Heart left ventricle (tissue), 16 donors: ENCODE measurements at regions of chr5 and their contacts with region 1.

Region 1: DNA sequence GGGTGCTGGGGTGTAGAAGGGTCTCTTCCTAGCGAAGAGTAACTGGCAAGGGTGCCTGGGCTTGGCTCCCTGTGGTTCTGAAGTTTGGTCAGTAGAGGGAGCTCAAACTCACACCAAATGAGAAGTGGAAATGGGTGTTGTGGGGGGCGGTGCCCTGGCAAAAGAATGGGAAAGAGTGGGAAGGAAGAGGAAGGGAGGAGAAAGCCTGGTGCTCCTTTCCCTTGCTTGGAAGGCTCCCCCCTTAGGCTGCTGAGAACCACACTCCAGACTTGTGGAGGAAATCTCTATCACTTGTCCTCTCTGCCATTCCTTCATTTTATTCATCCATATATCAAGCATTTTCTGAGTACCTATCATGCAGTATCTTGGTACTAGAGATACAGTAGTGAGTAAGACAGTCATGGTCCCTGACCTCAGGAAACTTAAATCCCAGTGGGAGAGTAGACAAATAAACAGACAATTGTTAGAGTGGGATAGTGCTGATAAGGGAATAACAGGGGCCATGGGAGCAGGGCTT is 13.0 kb downstream of the SLC4A9 start:
- DNase-seq: peak; percentile 75 to 79 (median 78)
- ATAC-seq: peak; percentile 39 to 90 (median 86)
- H3K4me3 ChIP-seq: no peak overlapping the region
- H3K27ac ChIP-seq: peak overlapping the region in 1 of 12 donors; percentile 3
- H3K4me1 ChIP-seq: peaks cover 0 to 9% (median 8%) of the 10 kb centered on the region in 12 donors
- H3K27me3 ChIP-seq: no peaks in the 10 kb centered on the region
- CTCF ChIP-seq: peak; percentile 69 to 90 (median 79)
- POLR2A ChIP-seq: no peak

Region 2: DNA sequence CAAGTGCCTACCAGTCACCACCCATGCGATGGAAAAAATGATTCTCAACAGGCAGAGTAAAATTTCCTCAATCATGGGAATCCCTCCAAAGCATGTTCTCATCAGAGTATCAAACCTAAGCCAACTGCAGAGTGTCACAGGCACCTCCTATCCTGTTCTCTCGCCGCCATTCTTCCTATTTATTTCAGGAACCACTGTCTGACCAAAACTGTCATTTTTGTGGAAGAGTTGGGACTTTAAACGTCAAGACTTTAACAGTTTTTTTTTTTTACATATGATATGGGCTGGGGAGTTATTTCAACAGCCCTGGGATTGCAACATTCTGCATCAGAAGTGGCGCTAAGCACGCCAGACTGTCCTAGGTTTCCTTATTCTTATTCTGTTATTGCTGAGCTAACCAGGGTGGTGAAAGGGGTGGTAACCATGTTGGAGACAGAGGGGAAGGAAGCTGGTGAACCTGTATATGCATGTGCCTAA is 99.6 kb before region 1 on chr5:
- intact Hi-C with region 1: no loop called
- DNase-seq: peak in 1 of 5 donors; percentile 35
- ATAC-seq: peak; percentile 56 to 85 (median 79)
- H3K4me3 ChIP-seq: no peak overlapping the region
- H3K27ac ChIP-seq: peak overlapping the region in 9 of 12 donors; percentile 5 to 71 (median 45)
- H3K4me1 ChIP-seq: peaks cover 0 to 27% (median 18%) of the 10 kb centered on the region in 12 donors
- H3K27me3 ChIP-seq: no peaks in the 10 kb centered on the region
- CTCF ChIP-seq: no peak
- POLR2A ChIP-seq: no peak

Region 3: GRCh38 chr5:140725799-140726471 is 352.9 kb after region 1 on chr5:
- intact Hi-C with region 1: loop called in 7 of 10 experiments (anchors 5 kb)
- DNase-seq: peak in 3 of 5 donors; percentile 17 to 57 (median 48)
- ATAC-seq: peak in 3 of 4 donors; percentile 81 to 89 (median 89)
- H3K4me3 ChIP-seq: peak overlapping the region in 6 of 12 donors; percentile 5 to 32 (median 16)
- H3K27ac ChIP-seq: no peak overlapping the region
- H3K4me1 ChIP-seq: peaks cover 0 to 5% (median 0%) of the 10 kb centered on the region in 12 donors
- H3K27me3 ChIP-seq: peaks cover 0 to 22% (median 0%) of the 10 kb centered on the region in 9 donors
- CTCF ChIP-seq: no peak
- POLR2A ChIP-seq: no peak

Region 4: DNA sequence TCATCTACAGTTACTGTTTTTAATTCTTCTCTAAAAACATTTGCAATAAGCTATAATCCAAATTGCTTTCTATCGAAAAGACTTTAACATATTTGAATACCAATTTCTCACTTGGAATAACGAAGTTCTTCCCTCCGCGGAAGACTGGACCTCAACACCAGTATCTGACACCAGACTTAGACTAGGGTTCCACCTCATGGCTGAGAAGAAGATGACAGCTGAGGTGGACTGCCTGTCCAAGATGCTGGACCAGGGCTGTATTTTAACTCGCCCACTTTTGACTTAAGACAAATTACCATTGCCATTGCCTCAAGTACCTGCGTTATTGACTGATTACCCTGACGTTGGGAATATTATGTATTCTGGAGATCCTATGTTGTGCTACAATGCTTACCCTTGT is 361.3 kb after region 1 on chr5:
- intact Hi-C with region 1: loop called in 5 of 10 experiments (anchors 5 kb)
- DNase-seq: peak in 1 of 5 donors; percentile 20
- ATAC-seq: peak in 2 of 4 donors; percentile 69 to 77
- H3K4me3 ChIP-seq: no peak overlapping the region
- H3K27ac ChIP-seq: no peak overlapping the region
- H3K4me1 ChIP-seq: no peaks in the 10 kb centered on the region
- H3K27me3 ChIP-seq: peaks cover 0 to 29% (median 6%) of the 10 kb centered on the region in 9 donors
- CTCF ChIP-seq: peak in 10 of 12 donors; percentile 14 to 67 (median 32)
- POLR2A ChIP-seq: no peak

Region 5: GRCh38 chr5:140806834-140807775 is 434.1 kb after region 1 on chr5 and contains the start of gene PCDHA4:
- intact Hi-C with region 1: no loop called
- DNase-seq: no peak
- ATAC-seq: peak in 2 of 4 donors; percentile 52
- H3K4me3 ChIP-seq: peak within 1 kb of the TSS in 10 of 12 donors; percentile 23 to 56 (median 37)
- H3K27ac ChIP-seq: no peak within 1 kb of the TSS
- H3K4me1 ChIP-seq: no peaks in the 10 kb centered on the region
- H3K27me3 ChIP-seq: peaks cover 0 to 37% (median 6%) of the 10 kb centered on the region in 9 donors
- CTCF ChIP-seq: peak in 9 of 12 donors; percentile 14 to 50 (median 33)
- POLR2A ChIP-seq: no peak
- total RNA-seq, gene PCDHA4: 0.02 to 0.21 (median 0.13) TPM in 6 of 9 donors, not detected in the others